WTC11 (cell line): ENCODE measurements at regions of chr1 and their contacts with region 1.

Region 1: GRCh38 chr1:185595835-185596667 is 138.1 kb upstream of the HMCN1 start:
- DNase-seq: peak; percentile 71
- ATAC-seq: peak; percentile 98
- H3K4me3 Mint-ChIP-seq: no peak overlapping the region
- H3K27ac Mint-ChIP-seq: no peak overlapping the region
- H3K4me1 Mint-ChIP-seq: peaks cover 27% of the 10 kb centered on the region
- H3K27me3 Mint-ChIP-seq: no peaks in the 10 kb centered on the region; the same call in 1 of the 2 replicates
- CTCF ChIP-seq: peak; percentile 82

Region 2: DNA sequence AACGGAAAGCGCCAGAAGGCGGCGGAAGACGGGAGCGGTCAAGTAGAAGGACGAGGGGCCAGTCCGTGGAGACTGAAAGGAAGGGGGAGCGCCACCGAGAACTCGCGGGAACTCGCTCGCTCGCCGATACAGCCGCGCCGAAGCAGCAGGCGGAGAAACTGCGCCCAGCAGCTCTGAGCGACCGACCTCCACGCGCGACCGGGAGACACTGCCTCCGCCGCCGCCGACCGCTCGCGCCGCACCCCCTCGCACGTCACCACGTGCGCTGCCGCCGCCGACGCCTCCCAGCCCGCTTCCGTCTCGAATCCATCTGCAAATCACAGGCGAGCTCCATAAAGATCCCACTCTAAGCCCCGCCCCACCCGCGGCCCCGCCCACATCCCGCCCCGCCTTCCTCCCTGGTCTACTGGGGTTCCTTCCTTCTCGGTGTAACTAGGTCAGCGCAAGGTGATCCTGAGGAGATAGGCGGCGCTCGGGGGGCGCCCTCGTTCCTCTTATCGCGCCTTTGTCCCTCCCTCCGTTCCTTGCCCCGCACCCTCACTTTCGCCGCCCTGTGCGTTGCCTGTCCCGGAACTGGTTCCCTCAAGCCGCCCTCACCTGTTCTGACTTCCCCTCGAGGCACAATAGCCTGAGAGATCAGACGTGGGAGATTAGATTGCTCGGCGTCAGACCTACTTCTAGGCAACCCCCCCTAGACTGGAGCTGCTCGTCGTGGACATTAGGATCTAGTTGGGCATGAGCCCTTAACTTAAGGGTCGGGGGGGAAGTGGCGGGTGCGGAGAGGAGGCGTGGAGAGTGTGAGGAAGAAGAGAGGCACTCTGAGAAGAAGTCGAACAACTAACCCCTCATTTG is 278.8 kb before region 1 on chr1 and contains the start of gene IVNS1ABP:
- CTCF ChIA-PET with region 1: interaction called, 25 read pairs
- POLR2A ChIA-PET with region 1: interaction called, 5 read pairs
- DNase-seq: peak; percentile 94
- ATAC-seq: peak; percentile 92
- H3K4me3 Mint-ChIP-seq: peak within 1 kb of the TSS; percentile 93
- H3K27ac Mint-ChIP-seq: peak within 1 kb of the TSS; percentile 95
- H3K4me1 Mint-ChIP-seq: peaks cover 49% of the 10 kb centered on the region
- H3K27me3 Mint-ChIP-seq: no peaks in the 10 kb centered on the region
- CTCF ChIP-seq: no peak
- total RNA-seq, gene IVNS1ABP: 141 to 159 TPM (median 141 TPM) in 3 replicates

Region 3: GRCh38 chr1:185559684-185560331 is 36.2 kb before region 1 on chr1:
- CTCF ChIA-PET with region 1: interaction called, 20 read pairs
- POLR2A ChIA-PET with region 1: no interaction called
- DNase-seq: peak; percentile 58
- ATAC-seq: peak; percentile 100
- H3K4me3 Mint-ChIP-seq: no peak overlapping the region
- H3K27ac Mint-ChIP-seq: no peak overlapping the region
- H3K4me1 Mint-ChIP-seq: peaks cover 10% of the 10 kb centered on the region
- H3K27me3 Mint-ChIP-seq: no peaks in the 10 kb centered on the region
- CTCF ChIP-seq: no peak

Region 4: GRCh38 chr1:185585770-185586169 is 10.3 kb before region 1 on chr1:
- CTCF ChIA-PET with region 1: interaction called, 10 read pairs
- POLR2A ChIA-PET with region 1: no interaction called
- DNase-seq: no peak
- ATAC-seq: no peak
- H3K4me3 Mint-ChIP-seq: no peak overlapping the region
- H3K27ac Mint-ChIP-seq: no peak overlapping the region
- H3K4me1 Mint-ChIP-seq: no peaks in the 10 kb centered on the region
- H3K27me3 Mint-ChIP-seq: peaks cover 10% of the 10 kb centered on the region; the same call in 1 of the 2 replicates
- CTCF ChIP-seq: no peak

Region 5: GRCh38 chr1:185646202-185646683 is 50.2 kb after region 1 on chr1:
- CTCF ChIA-PET with region 1: interaction called, 27 read pairs
- POLR2A ChIA-PET with region 1: no interaction called
- DNase-seq: no peak
- ATAC-seq: peak; percentile 96
- H3K4me3 Mint-ChIP-seq: peak overlapping the region; percentile 54
- H3K27ac Mint-ChIP-seq: peak overlapping the region; percentile 100
- H3K4me1 Mint-ChIP-seq: peaks cover 37% of the 10 kb centered on the region
- H3K27me3 Mint-ChIP-seq: peaks cover 13% of the 10 kb centered on the region
- CTCF ChIP-seq: no peak

Region 6: DNA sequence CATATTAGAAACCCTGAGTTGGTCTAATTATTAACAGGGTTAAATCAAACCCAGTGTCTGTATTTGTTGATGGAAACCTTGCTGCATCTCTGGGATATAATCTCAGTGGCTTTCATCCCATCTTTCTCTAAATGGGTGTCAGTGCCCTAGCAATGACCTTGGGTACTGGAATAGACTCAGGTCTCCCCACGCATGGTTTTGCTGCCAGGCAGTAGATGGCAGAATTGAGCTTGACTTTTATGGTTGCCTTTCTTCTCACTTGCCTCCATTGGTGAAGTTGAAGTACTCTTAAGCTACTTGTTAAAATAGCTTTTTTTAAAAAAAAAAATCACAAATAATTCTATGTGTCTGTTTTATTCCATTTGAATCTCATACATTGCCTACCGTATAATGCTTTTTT is 56.3 kb after region 1 on chr1:
- CTCF ChIA-PET with region 1: interaction called, 27 read pairs
- POLR2A ChIA-PET with region 1: no interaction called
- DNase-seq: no peak
- ATAC-seq: peak; percentile 52
- H3K4me3 Mint-ChIP-seq: no peak overlapping the region
- H3K27ac Mint-ChIP-seq: no peak overlapping the region
- H3K4me1 Mint-ChIP-seq: peaks cover 17% of the 10 kb centered on the region
- H3K27me3 Mint-ChIP-seq: peaks cover 10% of the 10 kb centered on the region
- CTCF ChIP-seq: no peak

Region 7: GRCh38 chr1:185670187-185670627 is 74.2 kb after region 1 on chr1:
- CTCF ChIA-PET with region 1: interaction called, 15 read pairs
- POLR2A ChIA-PET with region 1: no interaction called
- DNase-seq: peak; percentile 50
- ATAC-seq: peak; percentile 72
- H3K4me3 Mint-ChIP-seq: no peak overlapping the region
- H3K27ac Mint-ChIP-seq: no peak overlapping the region
- H3K4me1 Mint-ChIP-seq: peaks cover 24% of the 10 kb centered on the region
- H3K27me3 Mint-ChIP-seq: no peaks in the 10 kb centered on the region
- CTCF ChIP-seq: no peak

Region 8: DNA sequence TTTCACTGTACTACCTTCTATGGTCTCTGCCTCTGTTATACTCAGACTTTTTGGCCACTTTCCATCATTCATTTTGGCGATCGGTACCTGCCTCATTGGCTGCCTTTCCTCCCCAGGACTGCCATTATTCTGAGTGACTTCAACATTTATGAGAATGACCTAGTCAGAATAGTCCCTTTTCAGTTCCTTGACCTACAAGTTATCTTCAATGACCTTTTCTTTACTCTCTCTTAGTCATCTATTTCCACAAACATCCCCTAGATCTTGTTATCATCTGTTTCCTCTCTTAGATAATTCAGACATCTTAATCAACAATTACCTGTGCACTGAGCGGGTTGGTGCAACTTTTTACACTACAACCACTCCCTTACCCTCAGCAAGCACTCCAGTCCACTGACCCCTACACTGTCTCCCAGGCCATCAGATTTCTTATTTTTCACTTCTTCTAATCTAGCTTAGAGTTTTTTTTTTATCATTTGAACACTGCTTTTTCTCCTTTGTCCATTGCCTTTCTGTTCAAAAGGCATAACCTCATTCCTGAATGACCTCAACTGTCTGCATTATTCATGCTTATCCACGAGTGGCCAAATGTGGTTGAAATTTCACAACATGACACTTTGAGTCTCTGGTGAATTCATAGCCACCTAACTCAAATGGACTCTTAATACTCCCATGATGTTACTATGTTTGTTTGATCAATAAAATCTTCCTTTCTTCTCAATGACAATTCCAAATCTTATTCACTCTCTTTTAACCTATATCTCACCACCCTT is 250.8 kb after region 1 on chr1:
- CTCF ChIA-PET with region 1: no interaction called
- POLR2A ChIA-PET with region 1: no interaction called
- DNase-seq: no peak
- ATAC-seq: no peak
- H3K4me3 Mint-ChIP-seq: no peak overlapping the region
- H3K27ac Mint-ChIP-seq: no peak overlapping the region
- H3K4me1 Mint-ChIP-seq: peaks cover 35% of the 10 kb centered on the region
- H3K27me3 Mint-ChIP-seq: no peaks in the 10 kb centered on the region
- CTCF ChIP-seq: no peak